RWPE1 (cell line): ENCODE measurements at regions of chr19 and their contacts with region 1.

Region 1: GRCh38 chr19:1774999-1775772 is 21.9 kb downstream of the ONECUT3 start:
- DNase-seq: peak; percentile 53
- H3K27ac ChIP-seq: peak overlapping the region; percentile 96
- CTCF ChIP-seq: peak; percentile 78

Region 2: DNA sequence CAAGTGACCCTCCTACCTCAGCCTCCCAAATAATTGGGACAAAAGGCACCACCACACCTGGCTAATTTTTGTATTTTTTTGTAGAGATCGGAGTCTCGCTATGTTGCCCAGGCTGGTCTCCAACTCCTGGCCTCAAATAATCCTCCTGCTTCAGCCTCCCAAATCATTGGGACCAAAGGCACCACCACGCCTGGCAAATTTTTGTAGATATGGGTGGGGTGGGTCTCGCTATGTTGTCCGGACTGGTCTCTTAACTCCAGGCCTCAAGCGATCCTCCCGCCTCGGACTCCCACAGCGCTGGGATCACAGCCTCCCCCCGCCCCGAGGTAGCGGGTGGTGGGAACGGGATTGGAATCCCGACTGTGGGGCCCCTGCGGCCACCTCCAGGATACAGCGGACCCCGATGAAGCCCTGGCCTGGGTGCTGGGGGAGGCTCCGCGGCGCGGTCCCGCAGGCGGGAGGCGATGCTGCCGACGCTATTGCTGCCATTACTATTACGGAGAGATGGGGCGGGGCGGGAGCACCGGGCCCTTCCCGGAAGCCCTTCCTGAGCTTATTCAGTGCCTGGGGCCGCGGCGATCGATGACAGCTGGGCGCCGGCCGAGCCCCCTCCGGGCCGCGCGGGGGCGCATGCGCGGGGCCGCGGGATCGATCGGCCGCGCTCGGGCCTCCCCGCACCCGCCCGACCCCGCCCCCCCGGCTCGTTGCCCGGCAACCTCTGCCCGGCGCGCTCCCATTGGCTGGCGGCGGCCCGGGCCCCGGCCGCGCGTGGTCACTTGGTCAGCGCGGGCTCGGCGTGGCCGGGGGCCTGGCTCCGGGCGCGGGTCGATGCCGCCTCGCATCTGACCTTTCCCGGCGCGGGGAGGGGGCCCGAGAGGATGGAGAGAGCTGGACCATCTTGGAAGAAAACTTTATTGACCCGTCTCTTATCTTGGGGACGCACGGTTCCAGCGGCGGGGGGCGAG is 49.8 kb before region 1 on chr19:
- CTCF ChIA-PET with region 1: no interaction called
- POLR2A ChIA-PET with region 1: interaction called, 10 read pairs
- DNase-seq: peak; percentile 91
- H3K27ac ChIP-seq: no peak overlapping the region
- CTCF ChIP-seq: peak; percentile 16; the same call in 1 of the 2 replicates

Region 3: DNA sequence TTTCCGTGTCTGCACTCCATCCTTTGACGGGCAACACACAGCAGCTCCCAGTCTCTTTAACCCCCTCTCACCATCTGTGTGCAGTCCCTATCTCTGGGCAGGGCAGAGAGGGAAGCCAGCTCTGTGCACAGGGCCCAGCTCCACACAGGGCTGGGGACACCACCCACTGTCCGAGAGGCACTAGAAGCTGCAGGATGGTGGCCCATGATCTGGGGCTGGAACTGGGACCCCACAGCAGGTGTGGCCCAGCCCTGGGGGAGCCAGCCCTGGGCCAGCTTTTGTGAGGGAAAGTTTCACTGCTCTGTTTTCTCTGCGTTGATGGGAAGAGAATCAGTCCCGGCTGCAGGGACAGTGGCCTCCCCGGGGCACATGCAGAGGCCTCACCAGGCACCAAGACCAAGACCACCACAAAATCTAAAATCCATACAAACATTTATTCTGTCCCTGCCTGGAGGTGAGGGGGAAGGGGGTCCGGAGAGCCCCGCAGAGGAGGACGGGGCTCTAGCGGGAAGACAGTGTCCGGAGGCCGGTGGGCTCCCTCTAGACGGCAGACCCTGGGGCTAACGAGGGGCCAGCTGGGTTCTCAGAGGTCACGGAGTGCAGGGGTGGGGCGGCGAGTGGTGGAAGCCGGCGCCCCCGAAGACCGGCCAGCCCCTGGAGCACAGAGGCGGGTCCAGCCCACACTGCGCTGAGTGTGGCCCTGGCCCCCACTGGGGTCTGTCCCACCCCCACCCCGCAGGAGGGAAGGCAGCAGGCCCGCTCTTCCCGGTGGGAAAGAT is 39.8 kb after region 1 on chr19:
- CTCF ChIA-PET with region 1: no interaction called
- POLR2A ChIA-PET with region 1: no interaction called
- DNase-seq: no peak
- H3K27ac ChIP-seq: peak overlapping the region; percentile 93
- CTCF ChIP-seq: no peak

Region 4: DNA sequence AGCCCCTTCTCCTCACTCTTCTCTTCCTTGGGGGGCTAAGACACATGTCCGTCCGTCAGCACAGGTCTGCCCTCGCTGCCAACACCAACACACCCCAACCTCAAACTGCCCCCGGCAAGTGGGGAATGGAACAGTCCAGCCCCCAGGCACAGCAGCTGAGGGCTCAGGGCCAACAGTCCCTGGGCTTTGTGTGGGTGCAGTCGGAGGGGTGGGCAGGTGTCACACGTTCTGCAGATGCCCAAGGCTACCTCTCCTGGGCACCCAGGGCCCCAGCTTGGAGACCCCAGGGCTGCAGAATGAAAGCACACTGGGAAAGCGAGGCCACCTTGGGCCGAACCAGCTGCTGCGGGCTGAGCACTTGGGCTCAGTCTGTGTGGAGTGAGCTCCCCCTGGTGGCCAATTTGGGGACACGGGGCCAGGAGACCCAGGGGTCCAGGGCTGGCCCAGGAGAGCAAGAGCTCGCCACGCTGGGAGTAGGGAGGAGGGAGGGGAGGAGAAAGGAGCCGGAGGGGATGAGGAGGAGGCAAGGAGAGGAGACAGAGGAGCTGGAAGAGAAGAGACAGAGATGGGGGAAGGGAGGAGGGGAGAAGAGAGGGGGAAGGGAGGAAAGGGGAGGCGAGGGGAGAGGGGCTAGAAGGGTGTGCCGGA is 50.8 kb after region 1 on chr19:
- CTCF ChIA-PET with region 1: interaction called, 12 read pairs
- POLR2A ChIA-PET with region 1: no interaction called
- DNase-seq: peak; percentile 76
- H3K27ac ChIP-seq: peak overlapping the region; percentile 42
- CTCF ChIP-seq: peak; percentile 93

Region 5: DNA sequence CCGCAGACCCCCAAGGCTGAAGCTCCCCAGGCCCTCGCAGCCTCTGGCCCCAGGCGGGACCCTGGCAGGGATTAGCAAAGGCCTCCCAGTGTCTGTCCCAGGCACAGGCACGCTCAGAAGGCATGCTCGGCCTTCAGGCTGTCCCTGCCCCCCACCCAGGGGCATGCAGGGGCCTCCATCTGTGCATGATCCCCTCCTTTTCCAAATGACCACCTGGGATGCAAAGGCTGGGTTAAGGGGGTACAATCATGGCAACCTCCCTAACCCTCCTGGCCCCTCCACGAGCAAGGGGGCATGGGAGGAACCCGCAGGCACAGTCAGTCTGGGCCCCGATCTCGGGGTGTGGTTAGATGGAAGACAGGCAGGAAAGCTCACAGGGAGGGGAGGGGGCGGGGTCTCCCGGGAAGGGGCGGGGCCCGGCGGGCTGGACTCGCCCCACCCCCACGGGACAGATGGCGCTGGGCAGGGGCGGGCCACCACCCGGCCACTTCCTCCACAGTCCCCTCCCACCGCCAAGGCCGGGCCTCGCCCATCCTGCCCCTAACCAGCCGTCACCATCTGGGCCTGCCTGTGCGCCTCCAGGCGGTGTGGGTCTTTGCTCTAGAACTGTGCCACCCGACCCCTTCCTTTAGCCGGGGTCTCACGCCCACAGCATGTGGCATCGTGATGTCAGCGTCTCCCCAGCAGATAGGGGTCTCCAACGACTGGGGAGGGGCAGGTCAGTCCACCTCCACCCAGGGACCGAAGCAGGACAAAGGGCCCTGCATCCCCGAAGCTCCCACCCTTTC is 80.0 kb after region 1 on chr19:
- CTCF ChIA-PET with region 1: no interaction called
- POLR2A ChIA-PET with region 1: no interaction called
- DNase-seq: peak; percentile 94
- H3K27ac ChIP-seq: peak overlapping the region; percentile 98
- CTCF ChIP-seq: 0 out of 2 replicates have a peak, but pooled peaks have one; percentile 5

Region 6: DNA sequence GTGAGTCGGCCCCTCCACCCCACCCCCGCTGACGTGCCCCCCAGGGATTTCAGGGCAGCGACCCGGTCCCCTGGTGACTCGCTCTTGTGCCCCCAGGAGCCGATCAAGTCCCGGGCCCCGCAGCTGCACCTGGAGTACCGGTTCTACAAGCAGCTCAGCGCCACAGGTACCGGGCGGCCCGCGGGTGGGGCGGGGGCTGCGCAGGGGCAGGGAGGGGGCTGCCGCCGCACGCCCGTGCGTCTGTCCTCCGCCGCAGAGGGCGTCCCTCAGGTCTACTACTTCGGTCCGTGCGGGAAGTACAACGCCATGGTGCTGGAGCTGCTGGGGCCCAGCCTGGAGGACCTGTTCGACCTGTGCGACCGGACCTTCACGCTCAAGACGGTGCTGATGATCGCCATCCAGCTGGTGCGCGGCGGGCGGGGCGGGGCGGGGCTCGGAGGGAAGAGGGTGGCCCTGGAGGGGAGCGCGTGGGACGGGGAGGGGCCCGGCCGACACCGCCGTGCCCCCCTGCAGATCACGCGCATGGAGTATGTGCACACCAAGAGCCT is 203.2 kb after region 1 on chr19:
- CTCF ChIA-PET with region 1: no interaction called
- POLR2A ChIA-PET with region 1: no interaction called
- DNase-seq: no peak
- H3K27ac ChIP-seq: peak overlapping the region; percentile 64; the same call in 1 of the 2 replicates
- CTCF ChIP-seq: no peak